ENCODE measurements at regions of chr6 and their contacts with region 1.

Region 1: GRCh38 chr6:27753668-27754407 is 158.4 kb downstream of the OR2B2 start:
- DNase-seq: peak; percentile 91
- H3K4me3 Mint-ChIP-seq: peak overlapping the region; percentile 86
- H3K27ac Mint-ChIP-seq: peak overlapping the region; percentile 83
- H3K4me1 Mint-ChIP-seq: peaks cover 49% of the 10 kb centered on the region
- H3K27me3 Mint-ChIP-seq: no peaks in the 10 kb centered on the region

Region 2: DNA sequence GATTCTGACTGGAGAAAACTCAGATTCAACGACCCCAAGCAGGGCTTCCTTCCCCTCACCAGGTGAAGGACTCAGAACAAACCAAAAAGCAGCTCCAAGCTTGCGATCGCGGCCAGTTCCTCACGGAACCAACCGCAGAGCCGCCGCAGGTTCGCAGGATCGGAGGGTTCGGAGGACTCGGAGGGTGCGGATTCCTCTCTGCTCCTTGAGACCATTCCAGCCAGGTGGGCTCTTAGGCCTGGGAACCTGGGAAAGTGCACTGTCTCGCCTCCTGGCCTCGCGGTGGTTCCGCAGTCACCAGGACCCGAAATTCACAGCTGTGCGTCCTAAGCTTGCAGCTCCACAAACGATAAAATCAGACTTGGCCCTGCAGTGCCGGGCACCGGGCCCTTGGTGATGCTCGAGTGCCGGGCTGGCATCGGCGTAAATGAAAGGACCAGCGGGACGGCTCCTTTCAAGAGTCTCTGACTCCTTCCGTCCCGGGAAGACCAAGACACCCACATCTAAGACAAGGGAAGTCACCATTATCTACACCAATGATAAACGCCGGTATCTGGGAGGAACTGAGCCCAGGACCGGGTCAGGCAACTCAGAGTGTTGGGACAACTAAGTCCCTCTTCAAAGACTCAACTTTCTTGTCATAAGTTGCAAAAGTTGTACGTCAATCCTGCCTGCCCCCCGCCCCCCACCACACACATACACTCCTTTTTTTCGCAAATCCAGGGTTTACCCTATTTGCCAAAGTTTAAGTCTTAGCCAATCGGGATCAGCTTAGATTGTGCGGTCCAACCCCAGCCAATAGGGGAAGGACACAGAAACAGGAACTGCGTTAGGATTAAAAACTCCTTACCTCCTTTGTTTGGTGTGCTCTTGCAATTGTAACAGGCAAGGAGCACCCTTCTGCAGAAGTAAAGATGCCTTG is 576.1 kb before region 1 on chr6:
- intact Hi-C with region 1: loop called (anchors 1 kb)
- DNase-seq: peak; percentile 92
- H3K4me3 Mint-ChIP-seq: peak overlapping the region; percentile 95
- H3K27ac Mint-ChIP-seq: peak overlapping the region; percentile 93
- H3K4me1 Mint-ChIP-seq: peaks cover 17% of the 10 kb centered on the region
- H3K27me3 Mint-ChIP-seq: peaks cover 33% of the 10 kb centered on the region

Region 3: DNA sequence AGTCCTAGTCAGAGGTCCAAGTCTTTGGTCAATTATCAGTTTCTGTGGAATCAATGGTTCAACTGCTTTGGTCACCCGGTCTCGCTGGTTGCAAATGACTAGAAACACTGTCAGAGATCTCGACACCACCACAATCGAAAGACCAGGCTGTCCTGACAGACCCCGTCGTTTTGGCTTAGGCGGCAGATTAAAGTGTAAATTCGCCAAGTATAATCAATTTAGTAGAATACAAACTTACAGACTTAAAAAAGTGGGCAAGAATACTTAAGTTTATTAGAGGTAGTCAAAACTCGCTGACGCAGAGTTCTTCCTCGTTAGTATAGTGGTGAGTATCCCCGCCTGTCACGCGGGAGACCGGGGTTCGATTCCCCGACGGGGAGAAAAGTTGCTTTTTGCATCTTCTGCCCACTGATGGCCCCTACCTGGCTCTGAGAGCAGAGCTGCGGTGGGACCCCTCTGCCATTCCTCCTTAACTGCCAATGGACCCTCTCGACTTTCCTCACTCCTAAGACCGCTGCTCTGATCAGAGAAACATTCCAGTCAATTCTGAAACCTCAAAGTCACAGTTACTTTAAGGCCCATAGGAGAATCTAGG is 250.3 kb before region 1 on chr6:
- intact Hi-C with region 1: loop called (anchors 2 kb)
- DNase-seq: peak; percentile 92
- H3K4me3 Mint-ChIP-seq: peak overlapping the region; percentile 94
- H3K27ac Mint-ChIP-seq: peak overlapping the region; percentile 81
- H3K4me1 Mint-ChIP-seq: peaks cover 19% of the 10 kb centered on the region
- H3K27me3 Mint-ChIP-seq: peaks cover 46% of the 10 kb centered on the region

Region 4: DNA sequence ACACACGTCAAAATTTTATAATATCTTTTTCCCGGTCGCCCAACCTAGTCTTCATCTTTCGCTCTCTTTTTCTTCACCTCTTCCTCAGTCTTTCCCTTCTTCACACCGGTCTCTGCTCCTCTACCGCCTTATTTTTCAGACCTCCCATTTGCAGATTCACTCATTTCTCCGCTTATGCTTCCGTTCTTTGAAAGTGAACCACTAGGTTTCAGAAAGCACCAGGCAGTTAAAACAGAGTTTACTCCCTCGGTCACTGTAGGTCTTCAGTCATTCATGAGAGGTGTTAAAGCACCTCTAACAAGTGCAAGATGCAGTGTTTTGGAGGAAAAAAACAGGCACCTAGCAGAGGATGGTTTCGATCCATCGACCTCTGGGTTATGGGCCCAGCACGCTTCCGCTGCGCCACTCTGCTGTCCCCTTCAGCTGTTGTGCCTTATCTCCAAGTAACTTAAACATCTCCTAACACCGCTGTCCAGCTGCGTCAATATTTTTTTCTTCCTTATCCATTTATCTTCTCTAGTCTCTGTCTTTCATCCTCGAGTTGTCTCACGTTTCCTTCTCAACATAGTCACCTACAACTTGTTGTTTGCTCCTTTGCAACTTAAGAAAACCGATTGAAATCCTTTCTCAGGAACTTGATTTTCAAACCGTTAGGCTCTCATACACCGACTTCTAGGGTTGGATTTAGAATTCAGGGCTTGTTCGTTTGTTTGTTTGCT is 161.2 kb before region 1 on chr6:
- intact Hi-C with region 1: loop called (anchors 10 kb)
- DNase-seq: peak; percentile 83
- H3K4me3 Mint-ChIP-seq: no peak overlapping the region
- H3K27ac Mint-ChIP-seq: no peak overlapping the region
- H3K4me1 Mint-ChIP-seq: peaks cover 2% of the 10 kb centered on the region
- H3K27me3 Mint-ChIP-seq: peaks cover 27% of the 10 kb centered on the region

Region 5: GRCh38 chr6:27672113-27672799 is 81.6 kb before region 1 on chr6:
- intact Hi-C with region 1: no loop called
- DNase-seq: peak; percentile 80
- H3K4me3 Mint-ChIP-seq: peak overlapping the region; percentile 65
- H3K27ac Mint-ChIP-seq: peak overlapping the region; percentile 31
- H3K4me1 Mint-ChIP-seq: peaks cover 41% of the 10 kb centered on the region
- H3K27me3 Mint-ChIP-seq: peaks cover 69% of the 10 kb centered on the region

Region 6: GRCh38 chr6:27743818-27744217 is 10.0 kb before region 1 on chr6:
- intact Hi-C with region 1: loop called (anchors 2 kb)
- DNase-seq: no peak
- H3K4me3 Mint-ChIP-seq: peak overlapping the region; percentile 5
- H3K27ac Mint-ChIP-seq: no peak overlapping the region
- H3K4me1 Mint-ChIP-seq: peaks cover 14% of the 10 kb centered on the region
- H3K27me3 Mint-ChIP-seq: peaks cover 31% of the 10 kb centered on the region

Region 7: GRCh38 chr6:28080631-28081485 is 327.0 kb after region 1 on chr6:
- intact Hi-C with region 1: loop called (anchors 10 kb)
- DNase-seq: peak; percentile 97
- H3K4me3 Mint-ChIP-seq: peak overlapping the region; percentile 97
- H3K27ac Mint-ChIP-seq: peak overlapping the region; percentile 94
- H3K4me1 Mint-ChIP-seq: peaks cover 14% of the 10 kb centered on the region
- H3K27me3 Mint-ChIP-seq: no peaks in the 10 kb centered on the region

Measured in activated CD4-positive, alpha-beta T cell treated with anti-CD3 and anti-CD28 coated beads, Interleukin-2, amount 10 ng/mL, durations not matched to agents 24 days and 14 days (primary cell).